A549 (cell line): ENCODE measurements at regions of chr17 and their contacts with region 1.

Region 1: GRCh38 chr17:30104575-30105339 is 11.9 kb upstream of the NSRP1 start:
- DNase-seq: peak; percentile 81 to 82
- ATAC-seq: peak; percentile 97 to 99
- H3K4me3 ChIP-seq: peak overlapping the region; percentile 42
- H3K27ac ChIP-seq: peak overlapping the region; percentile 49 to 76
- H3K4me1 ChIP-seq: 0 out of 3 replicates have a peak, but pooled peaks cover 5% of the 10 kb centered on the region
- CTCF ChIP-seq: peak; percentile 99
- EP300 ChIP-seq: no peak
- POLR2A ChIP-seq: no peak
- RAD21 ChIP-seq: peak; percentile 91 to 92

Region 2: DNA sequence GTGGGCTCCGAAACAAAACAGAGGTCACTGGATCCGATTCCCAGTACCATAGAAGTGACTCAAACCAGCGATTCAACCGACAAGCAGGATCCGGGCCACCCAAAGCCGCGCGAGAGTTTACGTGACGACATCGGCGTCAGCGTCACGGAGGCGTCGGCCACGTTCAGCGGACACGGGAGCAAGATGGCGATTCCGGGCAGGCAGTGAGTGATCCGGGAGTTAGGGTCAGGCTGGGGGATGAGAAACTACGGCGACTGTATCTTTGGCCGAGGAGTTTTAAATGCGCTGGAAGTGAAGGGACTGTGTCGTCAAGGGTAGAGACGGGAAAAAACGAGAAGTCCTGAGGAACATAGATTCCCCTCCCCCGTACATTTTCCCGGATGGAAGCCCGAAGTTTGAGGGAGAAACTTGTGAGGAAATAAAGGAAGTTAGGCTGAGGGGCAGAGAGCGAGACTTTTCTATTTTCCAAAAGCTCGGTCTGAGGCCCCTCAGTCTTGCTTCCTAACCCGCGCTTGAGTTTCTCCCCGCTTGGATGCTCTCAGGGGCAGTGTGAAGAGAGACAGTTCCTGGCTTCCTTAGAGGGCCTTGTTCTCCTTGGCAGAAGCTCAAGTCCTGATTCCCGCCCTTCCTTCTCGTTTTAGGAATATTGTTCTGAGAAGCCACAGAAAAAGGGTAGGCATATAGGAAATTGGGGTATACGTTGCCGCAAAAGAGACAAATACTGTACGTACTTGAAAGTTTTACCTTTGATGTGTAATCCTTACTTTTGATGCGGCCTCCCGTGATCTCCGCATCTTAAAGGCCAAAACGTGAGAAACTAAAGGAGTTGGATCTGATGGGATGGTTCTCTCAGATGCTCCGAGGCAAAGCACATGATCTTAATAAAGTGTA is 12.1 kb after region 1 on chr17 and contains the start of gene NSRP1:
- CTCF ChIA-PET with region 1: interaction called, 75 read pairs
- POLR2A ChIA-PET with region 1: interaction called, 8 read pairs
- DNase-seq: peak; percentile 97 to 99
- ATAC-seq: peak; percentile 96 to 98
- H3K4me3 ChIP-seq: peak within 1 kb of the TSS; percentile 62
- H3K27ac ChIP-seq: peak within 1 kb of the TSS; percentile 89 to 94
- H3K4me1 ChIP-seq: peaks cover 40% of the 10 kb centered on the region; the same call in 2 of the 3 replicates
- CTCF ChIP-seq: no peak
- EP300 ChIP-seq: no peak
- POLR2A ChIP-seq: peak; percentile 97
- RAD21 ChIP-seq: no peak
- polyA plus RNA-seq, gene NSRP1: 25.2 and 30.9 TPM in 2 replicates

Region 3: DNA sequence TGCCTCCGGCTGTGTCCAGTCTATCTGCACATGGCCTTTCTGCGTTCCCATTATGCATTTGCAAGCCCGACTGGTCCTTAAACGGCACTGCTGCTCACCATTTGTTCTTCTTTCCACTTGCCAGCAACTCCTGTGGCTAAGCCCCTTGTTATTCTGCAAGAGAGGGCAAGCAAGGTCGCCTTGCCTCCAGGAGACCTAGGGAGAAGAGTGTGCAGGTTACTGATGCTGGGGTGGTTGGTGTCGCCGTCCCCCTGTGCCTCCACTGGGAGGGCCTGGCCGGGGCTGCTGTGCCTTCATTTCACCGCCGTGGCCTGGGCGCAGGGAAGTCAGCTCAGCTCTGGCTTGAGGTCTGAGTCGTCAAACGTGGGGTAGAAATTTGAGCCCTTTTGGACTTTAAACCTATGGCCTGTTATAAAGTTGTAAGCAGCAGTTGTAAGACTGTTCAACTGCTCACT is 118.0 kb after region 1 on chr17:
- CTCF ChIA-PET with region 1: interaction called, 11 read pairs
- POLR2A ChIA-PET with region 1: no interaction called
- DNase-seq: no peak
- ATAC-seq: no peak
- H3K4me3 ChIP-seq: no peak overlapping the region
- H3K27ac ChIP-seq: no peak overlapping the region
- H3K4me1 ChIP-seq: no peaks in the 10 kb centered on the region
- CTCF ChIP-seq: no peak
- EP300 ChIP-seq: no peak
- POLR2A ChIP-seq: no peak
- RAD21 ChIP-seq: no peak

Region 4: DNA sequence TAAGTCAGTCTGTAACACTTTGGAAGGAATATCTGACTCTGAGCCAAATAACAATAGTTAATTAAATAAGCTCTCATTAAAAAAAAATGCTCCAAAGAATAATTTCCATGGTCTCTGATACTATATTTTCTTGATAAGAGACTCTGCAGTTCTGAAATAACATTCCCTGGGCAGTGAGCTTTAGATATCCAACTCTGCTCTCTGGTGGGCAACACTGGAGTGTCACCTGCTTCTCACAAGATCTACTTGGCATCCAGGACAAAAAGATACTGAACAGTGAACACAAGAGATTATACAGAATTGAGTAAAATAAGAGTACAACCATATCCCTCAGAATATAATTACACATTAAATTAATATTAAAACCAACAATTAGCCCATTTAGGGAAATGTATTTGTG is 173.3 kb after region 1 on chr17:
- CTCF ChIA-PET with region 1: interaction called, 21 read pairs
- POLR2A ChIA-PET with region 1: no interaction called
- DNase-seq: peak; percentile 31 to 65
- ATAC-seq: peak; percentile 84 to 85
- H3K4me3 ChIP-seq: no peak overlapping the region
- H3K27ac ChIP-seq: no peak overlapping the region
- H3K4me1 ChIP-seq: no peaks in the 10 kb centered on the region
- CTCF ChIP-seq: peak; percentile 56
- EP300 ChIP-seq: no peak
- POLR2A ChIP-seq: no peak
- RAD21 ChIP-seq: peak; percentile 64 to 67

Region 5: GRCh38 chr17:30323895-30324319 is 219.2 kb after region 1 on chr17:
- CTCF ChIA-PET with region 1: interaction called, 15 read pairs
- POLR2A ChIA-PET with region 1: no interaction called
- DNase-seq: peak in 1 of 2 experiments; percentile 43
- ATAC-seq: peak; percentile 49 to 68
- H3K4me3 ChIP-seq: no peak overlapping the region
- H3K27ac ChIP-seq: peak overlapping the region; percentile 33 to 48; a peak in 4 of 6 replicates
- H3K4me1 ChIP-seq: peaks cover 30% of the 10 kb centered on the region
- CTCF ChIP-seq: no peak
- EP300 ChIP-seq: no peak
- POLR2A ChIP-seq: no peak
- RAD21 ChIP-seq: no peak

Region 6: GRCh38 chr17:30413109-30413508 is 308.4 kb after region 1 on chr17:
- CTCF ChIA-PET with region 1: no interaction called
- POLR2A ChIA-PET with region 1: no interaction called
- DNase-seq: no peak
- ATAC-seq: no peak
- H3K4me3 ChIP-seq: no peak overlapping the region
- H3K27ac ChIP-seq: no peak overlapping the region
- H3K4me1 ChIP-seq: no peaks in the 10 kb centered on the region
- CTCF ChIP-seq: no peak
- EP300 ChIP-seq: no peak
- POLR2A ChIP-seq: no peak
- RAD21 ChIP-seq: no peak